ENCODE measurements at regions of chr20 and their contacts with region 1.

Region 1: DNA sequence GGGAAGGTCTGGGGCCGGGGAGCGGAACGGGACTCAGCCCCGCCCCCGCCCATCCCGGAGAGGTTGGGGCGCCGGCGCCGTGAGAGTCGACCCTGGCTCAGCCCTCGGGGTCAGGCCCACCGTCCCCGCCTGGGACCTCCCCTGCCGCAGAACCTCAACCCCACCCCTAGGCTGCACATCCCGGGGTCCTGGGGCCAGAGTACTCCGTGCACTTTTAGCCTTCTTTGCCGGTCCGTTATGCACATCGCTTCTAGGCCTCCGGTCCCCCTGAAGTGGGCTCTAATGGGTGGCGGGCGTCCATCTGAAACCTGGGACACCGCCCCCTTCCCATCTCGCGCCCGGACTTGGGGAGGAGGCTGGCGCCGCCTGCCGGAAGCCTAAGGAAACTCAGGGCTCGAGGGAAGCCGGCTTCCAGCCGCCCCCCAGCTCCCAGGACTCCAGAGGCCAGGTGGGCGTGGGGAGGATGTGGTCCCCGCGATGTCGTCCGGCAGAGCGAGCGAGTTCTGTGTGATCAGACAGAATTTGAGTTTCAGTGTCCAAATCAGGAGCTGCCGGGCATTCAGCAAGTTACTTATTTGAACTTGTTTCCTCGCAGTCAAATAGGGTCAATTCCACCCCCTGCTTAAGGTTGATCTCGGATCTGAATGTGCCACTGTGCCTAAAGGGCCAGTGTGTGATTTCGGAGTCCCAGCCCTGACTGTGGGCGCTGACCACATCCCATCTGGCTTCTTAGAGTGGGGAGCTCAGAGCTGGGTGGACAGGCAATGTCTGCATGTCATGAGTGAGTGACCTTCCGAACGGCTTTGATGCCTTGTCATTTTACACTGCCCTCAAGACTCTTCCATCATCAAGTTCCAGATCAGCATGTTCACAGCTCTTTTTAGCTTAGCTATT is 47.6 kb downstream of the CPXM1 start:
- DNase-seq: peak; percentile 29 to 89
- H3K4me3 ChIP-seq: peak overlapping the region; percentile 33 to 62 (median 44)
- H3K27ac ChIP-seq: no peak overlapping the region
- H3K4me1 ChIP-seq: peaks cover 2 to 38% (median 25%) of the 10 kb centered on the region in 4 experiments
- H3K27me3 ChIP-seq: peaks cover 39 to 64% (median 61%) of the 10 kb centered on the region in 4 experiments
- CTCF ChIP-seq: peak; percentile 79 to 91 (median 81)
- EP300 ChIP-seq: no peak
- POLR2A ChIP-seq: no peak
- RAD21 ChIP-seq: peak; percentile 71 to 84

Region 2: DNA sequence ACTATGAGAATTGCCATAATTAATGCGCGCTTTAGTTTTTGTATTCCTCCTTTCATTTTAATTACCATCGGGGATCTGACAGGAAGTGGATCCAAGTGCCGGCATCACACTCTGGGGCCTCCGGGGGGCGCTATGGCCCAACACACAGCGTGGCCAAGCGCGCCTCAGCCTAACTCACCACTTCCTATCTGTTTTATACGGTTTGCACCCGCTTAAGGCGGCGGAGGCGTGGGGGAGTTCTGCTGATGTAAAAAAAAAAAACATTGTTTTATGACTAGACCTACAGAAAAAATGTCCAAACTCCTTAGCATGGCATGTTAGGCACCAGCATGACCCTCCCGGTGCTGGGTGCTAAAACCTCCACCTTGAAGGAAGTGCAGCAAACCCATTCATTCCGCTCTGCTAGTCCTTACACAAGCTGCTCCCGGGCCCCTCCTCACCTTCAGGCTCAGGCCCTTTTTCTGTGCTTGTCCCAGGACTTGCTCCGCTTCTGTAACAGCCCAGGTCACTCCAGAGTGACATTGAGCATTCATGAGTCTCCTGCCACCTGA is 64.7 kb before region 1 on chr20:
- CTCF ChIA-PET with region 1: interaction called, 151 read pairs
- POLR2A ChIA-PET with region 1: interaction called, 8 read pairs
- DNase-seq: peak in 1 of 2 experiments; percentile 77
- H3K4me3 ChIP-seq: peak overlapping the region in 2 of 4 experiments; percentile 10 to 50; a peak in 2 of 8 replicates
- H3K27ac ChIP-seq: no peak overlapping the region
- H3K4me1 ChIP-seq: peaks cover 3 to 15% (median 6%) of the 10 kb centered on the region in 4 experiments
- H3K27me3 ChIP-seq: peaks cover 30 to 44% (median 41%) of the 10 kb centered on the region in 4 experiments
- CTCF ChIP-seq: peak; percentile 86 to 91 (median 89)
- EP300 ChIP-seq: no peak
- POLR2A ChIP-seq: no peak
- RAD21 ChIP-seq: peak; percentile 95 to 96

Region 3: GRCh38 chr20:2729251-2729713 is 23.5 kb before region 1 on chr20:
- CTCF ChIA-PET with region 1: interaction called, 11 read pairs
- POLR2A ChIA-PET with region 1: no interaction called
- DNase-seq: no peak
- H3K4me3 ChIP-seq: no peak overlapping the region
- H3K27ac ChIP-seq: no peak overlapping the region
- H3K4me1 ChIP-seq: no peaks in the 10 kb centered on the region
- H3K27me3 ChIP-seq: no peaks in the 10 kb centered on the region
- CTCF ChIP-seq: no peak
- EP300 ChIP-seq: no peak
- POLR2A ChIP-seq: no peak
- RAD21 ChIP-seq: no peak

Region 4: DNA sequence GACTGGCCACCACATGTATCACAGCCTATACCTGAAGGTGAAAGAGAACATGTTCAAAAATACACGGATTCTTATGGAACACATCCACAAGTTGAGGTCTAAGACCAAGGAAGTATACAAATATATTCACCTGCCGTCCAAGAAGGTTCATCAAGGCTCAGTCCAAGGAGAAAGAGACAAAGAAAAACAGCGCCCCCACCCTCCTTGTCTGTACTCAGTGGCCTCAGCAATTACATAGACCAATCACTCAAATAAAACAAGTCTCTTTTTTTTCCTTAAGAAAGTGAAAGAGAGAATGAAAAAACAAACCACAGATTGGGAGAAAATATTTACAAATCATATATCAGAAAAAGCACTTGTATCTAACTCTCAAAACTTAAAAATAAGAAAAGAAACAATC is 28.1 kb after region 1 on chr20:
- CTCF ChIA-PET with region 1: interaction called, 19 read pairs
- POLR2A ChIA-PET with region 1: no interaction called
- DNase-seq: no peak
- H3K4me3 ChIP-seq: no peak overlapping the region
- H3K27ac ChIP-seq: no peak overlapping the region
- H3K4me1 ChIP-seq: no peaks in the 10 kb centered on the region
- H3K27me3 ChIP-seq: no peaks in the 10 kb centered on the region
- CTCF ChIP-seq: no peak
- EP300 ChIP-seq: no peak
- POLR2A ChIP-seq: no peak
- RAD21 ChIP-seq: no peak

Region 5: DNA sequence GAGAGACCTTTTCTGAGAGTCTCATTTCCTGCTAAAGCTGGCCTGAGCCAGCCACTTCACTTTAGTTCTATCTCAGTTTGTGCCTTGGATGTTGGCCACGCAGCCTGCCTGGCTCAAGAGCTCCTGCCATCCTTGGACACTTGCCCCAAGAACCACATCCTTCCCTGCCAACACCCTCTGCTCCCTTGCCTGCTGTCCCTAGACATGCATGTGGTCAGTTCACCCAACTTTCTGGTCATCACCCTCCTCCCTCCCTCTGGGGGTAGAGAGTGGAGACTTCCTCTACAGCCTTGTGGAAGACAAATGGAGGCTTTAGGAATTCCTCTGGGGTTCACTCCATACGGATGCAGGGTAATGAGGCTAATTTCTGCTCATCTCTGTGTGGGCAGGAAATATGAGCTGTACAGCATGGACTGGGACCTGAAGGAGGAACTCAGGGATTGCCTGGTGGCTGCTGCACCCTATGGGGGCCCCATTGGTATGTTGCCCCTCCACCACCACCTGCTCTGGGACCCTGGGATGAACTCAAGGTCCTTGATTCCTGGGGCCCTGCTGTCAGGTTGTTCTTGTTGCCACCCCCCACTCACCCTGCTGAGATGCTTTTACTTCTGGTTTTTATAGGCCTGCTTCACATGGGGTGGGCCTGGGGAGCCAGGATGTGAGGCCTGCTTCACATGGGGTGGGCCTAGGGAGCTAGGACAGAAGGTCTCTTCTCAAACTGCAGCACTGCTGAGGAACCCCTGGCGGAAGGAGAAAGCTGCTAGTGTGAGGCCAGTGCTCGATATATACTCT is 106.7 kb after region 1 on chr20:
- CTCF ChIA-PET with region 1: interaction called, 38 read pairs
- POLR2A ChIA-PET with region 1: no interaction called
- DNase-seq: no peak
- H3K4me3 ChIP-seq: no peak overlapping the region
- H3K27ac ChIP-seq: no peak overlapping the region
- H3K4me1 ChIP-seq: no peaks in the 10 kb centered on the region
- H3K27me3 ChIP-seq: no peaks in the 10 kb centered on the region
- CTCF ChIP-seq: no peak
- EP300 ChIP-seq: no peak
- POLR2A ChIP-seq: no peak
- RAD21 ChIP-seq: no peak

Measured in H1 (cell line).